ENCODE measurements at regions of chr21 and their contacts with region 1.

Region 1: GRCh38 chr21:34928637-34929036 is 120.5 kb downstream of the RUNX1 start:
- DNase-seq: no peak
- H3K4me3 Mint-ChIP-seq: no peak overlapping the region
- H3K27ac Mint-ChIP-seq: peak overlapping the region; percentile 6
- H3K4me1 Mint-ChIP-seq: peaks cover 70% of the 10 kb centered on the region
- H3K27me3 Mint-ChIP-seq: no peaks in the 10 kb centered on the region

Region 2: GRCh38 chr21:34227386-34227852 is 701.2 kb before region 1 on chr21:
- intact Hi-C with region 1: no loop called
- DNase-seq: no peak
- H3K4me3 Mint-ChIP-seq: no peak overlapping the region
- H3K27ac Mint-ChIP-seq: no peak overlapping the region
- H3K4me1 Mint-ChIP-seq: no peaks in the 10 kb centered on the region
- H3K27me3 Mint-ChIP-seq: no peaks in the 10 kb centered on the region

Region 3: GRCh38 chr21:34897828-34898227 is 30.8 kb before region 1 on chr21:
- intact Hi-C with region 1: loop called (anchors 2 kb)
- DNase-seq: no peak
- H3K4me3 Mint-ChIP-seq: no peak overlapping the region
- H3K27ac Mint-ChIP-seq: peak overlapping the region; percentile 47
- H3K4me1 Mint-ChIP-seq: peaks cover 52% of the 10 kb centered on the region
- H3K27me3 Mint-ChIP-seq: no peaks in the 10 kb centered on the region

Region 4: GRCh38 chr21:34946916-34947534 is 18.4 kb after region 1 on chr21:
- intact Hi-C with region 1: loop called (anchors 2 kb)
- DNase-seq: no peak
- H3K4me3 Mint-ChIP-seq: no peak overlapping the region
- H3K27ac Mint-ChIP-seq: peak overlapping the region; percentile 83
- H3K4me1 Mint-ChIP-seq: peaks cover 80% of the 10 kb centered on the region
- H3K27me3 Mint-ChIP-seq: no peaks in the 10 kb centered on the region